Tibial artery (tissue), 4 donors: ENCODE measurements at regions of chr10 and their contacts with region 1.

Region 1: DNA sequence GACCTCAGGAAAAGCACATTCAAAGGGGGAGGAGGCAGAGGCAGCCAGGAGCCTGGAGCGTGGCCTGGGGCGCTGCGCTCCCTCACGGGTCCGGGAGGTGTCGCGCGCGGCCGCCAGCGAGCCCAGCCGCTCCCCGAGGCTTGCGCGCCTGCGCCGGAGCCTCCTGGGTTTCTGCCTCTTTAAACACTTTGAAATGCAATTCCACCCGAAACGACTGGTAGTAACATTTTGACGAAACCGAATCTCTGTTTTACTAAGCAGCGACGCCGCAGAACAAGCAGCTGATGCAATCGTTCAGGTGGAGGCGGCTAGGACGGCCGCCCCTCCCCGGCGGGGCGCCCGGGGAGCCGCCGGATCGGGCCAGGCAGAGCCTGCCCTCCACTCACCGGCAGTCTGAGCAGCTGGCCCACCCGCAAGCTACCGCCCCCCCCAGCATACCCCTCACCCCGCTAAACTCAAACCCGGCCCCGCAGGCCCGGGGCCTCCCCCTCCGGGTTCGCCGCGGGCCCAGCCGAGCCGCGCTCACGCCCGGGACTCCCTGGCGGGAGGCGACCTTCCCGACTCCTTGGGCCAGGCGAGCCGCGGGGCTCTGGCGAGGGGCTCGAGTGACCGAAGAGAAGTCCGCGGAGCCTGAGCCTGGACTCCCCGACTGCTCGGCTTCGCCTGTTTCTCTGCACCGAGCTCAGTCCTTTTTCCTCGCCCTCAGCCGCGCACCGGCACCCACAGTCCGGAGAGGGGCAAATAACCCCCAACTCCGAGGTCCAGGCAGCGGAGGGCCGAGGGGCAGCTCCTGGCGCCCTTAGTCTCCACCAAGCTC is 3.2 kb downstream of the MKX start:
- DNase-seq: peak; percentile 81 to 93
- H3K4me3 ChIP-seq: peak overlapping the region; percentile 63 to 87
- H3K27ac ChIP-seq: peak overlapping the region; percentile 98 to 99
- H3K4me1 ChIP-seq: peaks cover 0 to 41% (median 17%) of the 10 kb centered on the region in 4 donors
- H3K27me3 ChIP-seq: peaks cover 0 to 4% of the 10 kb centered on the region in 2 donors
- CTCF ChIP-seq: peak; percentile 81 to 93

Region 2: GRCh38 chr10:28179006-28179742 is 436.8 kb after region 1 on chr10:
- intact Hi-C with region 1: loop called (anchors 5 kb)
- DNase-seq: no peak
- H3K4me3 ChIP-seq: peak overlapping the region; percentile 33 to 41
- H3K27ac ChIP-seq: peak overlapping the region; percentile 67 to 69
- H3K4me1 ChIP-seq: peaks cover 0 to 59% (median 2%) of the 10 kb centered on the region in 4 donors
- H3K27me3 ChIP-seq: no peaks in the 10 kb centered on the region
- CTCF ChIP-seq: peak; percentile 73 to 83

Region 3: GRCh38 chr10:28241741-28242399 is 499.5 kb after region 1 on chr10:
- intact Hi-C with region 1: loop called (anchors 2 kb)
- DNase-seq: no peak
- H3K4me3 ChIP-seq: no peak overlapping the region
- H3K27ac ChIP-seq: no peak overlapping the region
- H3K4me1 ChIP-seq: peaks cover 0 to 35% (median 1%) of the 10 kb centered on the region in 4 donors
- H3K27me3 ChIP-seq: no peaks in the 10 kb centered on the region
- CTCF ChIP-seq: peak; percentile 88 to 94

Region 4: GRCh38 chr10:28302638-28303488 is 560.5 kb after region 1 on chr10 and contains the start of gene MPP7:
- intact Hi-C with region 1: loop called (anchors 10 kb)
- DNase-seq: peak; percentile 96 to 98
- H3K4me3 ChIP-seq: peak within 1 kb of the TSS; percentile 95 to 99
- H3K27ac ChIP-seq: peak within 1 kb of the TSS; percentile 97 to 99
- H3K4me1 ChIP-seq: peaks cover 0 to 56% (median 3%) of the 10 kb centered on the region in 4 donors
- H3K27me3 ChIP-seq: no peaks in the 10 kb centered on the region
- CTCF ChIP-seq: peak; percentile 49 to 55

Region 5: DNA sequence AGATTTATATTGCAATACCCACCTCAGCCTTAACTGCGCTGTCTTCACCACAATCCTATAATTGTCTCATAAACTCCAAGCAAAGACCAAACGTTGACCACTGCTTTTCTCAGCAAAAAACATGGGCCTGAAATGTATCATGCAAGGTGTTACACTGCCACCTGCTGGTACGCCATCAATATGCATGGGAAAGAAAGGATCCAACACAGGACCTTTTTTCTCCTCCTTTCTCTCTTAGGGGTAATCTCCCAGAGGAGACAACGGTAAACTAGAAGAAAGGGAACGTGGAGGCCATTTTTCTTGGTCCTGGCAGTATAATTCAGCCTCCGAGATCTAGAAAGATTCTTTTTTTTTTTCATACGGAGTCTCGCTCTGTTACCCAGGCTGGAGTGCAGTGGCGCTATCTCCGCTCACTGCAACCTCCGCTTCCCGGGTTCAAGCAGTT is 639.5 kb after region 1 on chr10:
- intact Hi-C with region 1: loop called (anchors 5 kb)
- DNase-seq: peak; percentile 88 to 92
- H3K4me3 ChIP-seq: no peak overlapping the region
- H3K27ac ChIP-seq: no peak overlapping the region
- H3K4me1 ChIP-seq: peaks cover 0 to 15% (median 0%) of the 10 kb centered on the region in 4 donors
- H3K27me3 ChIP-seq: no peaks in the 10 kb centered on the region
- CTCF ChIP-seq: peak; percentile 95 to 99